AG04450 (cell line): ENCODE measurements at regions of chr14 and their contacts with region 1.

Region 1: GRCh38 chr14:23494223-23494622 is 24.7 kb downstream of the NGDN start:
- DNase-seq: no peak
- H3K4me3 ChIP-seq: no peak overlapping the region
- H3K27ac ChIP-seq: no peak overlapping the region
- H3K27me3 ChIP-seq: no peaks in the 10 kb centered on the region
- CTCF ChIP-seq: no peak

Region 2: DNA sequence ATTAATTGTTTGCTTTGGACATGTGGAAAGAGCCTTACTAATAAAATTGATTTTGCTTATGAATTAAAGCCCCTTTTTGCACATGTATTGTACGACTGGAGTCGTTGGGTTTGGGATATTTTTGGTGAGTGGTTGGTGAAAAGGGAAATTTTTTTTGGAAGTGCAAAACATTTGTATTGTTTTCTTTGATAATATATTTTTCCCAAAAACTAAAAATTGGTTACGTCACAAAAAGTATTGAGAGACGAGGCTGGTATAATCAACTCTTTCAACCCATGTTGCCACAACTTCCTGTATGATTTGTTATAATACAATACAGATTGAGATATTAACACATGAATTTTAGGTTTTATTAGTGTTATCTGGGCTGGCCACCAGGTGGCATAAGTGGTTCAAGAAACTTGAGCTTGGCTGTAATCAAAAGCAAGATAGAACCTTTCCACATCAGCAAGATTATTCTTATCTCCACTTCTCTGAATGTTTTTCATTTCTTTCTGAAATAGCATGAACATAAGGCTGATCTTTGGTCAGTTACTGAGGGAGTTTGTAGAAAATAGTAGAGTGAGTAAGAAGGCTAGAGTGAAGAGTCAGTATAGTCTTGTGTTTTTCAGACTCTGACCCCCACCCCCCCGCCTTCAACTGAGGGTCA is 16.0 kb before region 1 on chr14:
- CTCF ChIA-PET with region 1: interaction called, 26 read pairs
- POLR2A ChIA-PET with region 1: no interaction called
- DNase-seq: peak; percentile 37
- H3K4me3 ChIP-seq: no peak overlapping the region
- H3K27ac ChIP-seq: no peak overlapping the region
- H3K27me3 ChIP-seq: no peaks in the 10 kb centered on the region
- CTCF ChIP-seq: peak; percentile 78